ENCODE measurements at regions of chr4 and their contacts with region 1.

Region 1: DNA sequence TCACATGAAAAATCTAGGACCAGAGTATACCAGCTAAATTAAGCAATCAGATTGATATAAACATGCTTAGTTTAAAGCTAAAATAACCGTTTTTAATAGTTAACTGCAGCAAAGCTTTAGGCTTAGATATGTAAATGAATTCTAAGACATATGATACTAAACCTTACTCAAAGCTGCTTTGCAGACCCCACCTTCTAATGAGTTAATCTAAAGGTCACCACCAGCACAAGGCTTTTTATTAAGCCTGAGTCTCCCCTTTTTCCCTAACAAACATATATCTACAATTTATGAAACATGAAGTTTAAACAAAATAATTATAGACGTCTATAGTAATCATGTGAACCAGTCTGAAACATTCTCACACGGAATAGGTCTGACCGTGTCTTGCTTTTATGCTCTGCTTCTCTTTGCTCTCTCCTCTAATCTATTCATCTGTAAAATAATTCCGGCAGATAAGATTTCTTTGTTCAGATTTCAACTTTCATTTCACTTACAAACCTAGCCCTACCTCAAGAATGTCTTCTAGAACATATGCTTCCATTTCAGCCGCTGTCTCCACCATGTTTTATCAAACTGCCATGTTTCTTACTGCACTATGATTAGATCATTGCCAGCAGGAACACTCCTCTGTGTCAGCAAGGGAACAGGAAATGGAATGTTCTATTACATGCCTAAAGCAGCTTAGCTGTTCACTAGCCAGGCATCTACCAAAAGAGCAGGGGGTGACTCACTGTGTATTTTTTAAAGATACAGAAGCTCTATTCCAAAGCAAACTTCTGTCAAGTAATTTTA is 35.9 kb downstream of the ANKRD17 start:
- DNase-seq: peak; percentile 57
- H3K4me3 Mint-ChIP-seq: no peak overlapping the region
- H3K27ac Mint-ChIP-seq: no peak overlapping the region
- H3K4me1 Mint-ChIP-seq: peaks cover 30% of the 10 kb centered on the region
- H3K27me3 Mint-ChIP-seq: no peaks in the 10 kb centered on the region

Region 2: GRCh38 chr4:73178389-73178788 is 44.3 kb before region 1 on chr4:
- CTCF ChIA-PET with region 1: interaction called, 3 read pairs
- POLR2A ChIA-PET with region 1: no interaction called
- intact Hi-C with region 1: loop called (anchors 5 kb)
- DNase-seq: no peak
- H3K4me3 Mint-ChIP-seq: no peak overlapping the region
- H3K27ac Mint-ChIP-seq: no peak overlapping the region
- H3K4me1 Mint-ChIP-seq: peaks cover 35% of the 10 kb centered on the region
- H3K27me3 Mint-ChIP-seq: no peaks in the 10 kb centered on the region